ENCODE measurements at regions of chr20 and their contacts with region 1.

Region 1: DNA sequence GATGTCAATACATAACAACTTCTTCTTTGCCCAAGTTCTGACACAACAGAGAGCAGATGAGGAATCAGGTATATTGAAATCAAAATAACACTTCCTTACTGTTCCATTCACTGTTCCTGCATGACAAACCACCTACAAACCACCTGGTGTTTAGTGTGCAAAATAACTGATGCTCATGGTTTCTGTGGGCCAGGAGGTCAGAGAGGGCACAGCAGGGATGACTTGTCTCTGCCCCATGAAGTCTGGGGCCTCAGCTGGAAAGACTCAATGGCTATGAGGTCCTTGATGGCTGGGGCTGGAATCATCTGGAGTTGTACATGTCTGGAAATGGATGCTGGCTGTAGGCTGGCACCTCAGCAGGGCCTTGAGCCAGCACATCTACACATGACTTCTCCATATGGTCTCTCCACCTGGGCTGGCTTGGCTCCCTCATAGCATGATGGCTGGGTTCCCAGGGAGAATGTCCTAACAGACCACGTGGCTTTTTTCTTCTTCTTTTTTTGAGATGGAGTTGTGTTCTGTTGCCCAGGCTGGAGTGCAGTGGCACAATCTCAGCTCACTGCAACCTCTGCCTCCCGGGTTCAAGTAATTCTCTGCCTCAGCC is 7.4 kb upstream of the COX4I2 start:
- DNase-seq: no peak
- H3K4me3 ChIP-seq: no peak overlapping the region
- CTCF ChIP-seq: no peak

Region 2: GRCh38 chr20:31560094-31560899 is 70.0 kb before region 1 on chr20:
- CTCF ChIA-PET with region 1: interaction called, 22 read pairs
- POLR2A ChIA-PET with region 1: no interaction called
- DNase-seq: no peak
- H3K4me3 ChIP-seq: no peak overlapping the region
- CTCF ChIP-seq: peak; percentile 89

Region 3: GRCh38 chr20:31597483-31597858 is 32.8 kb before region 1 on chr20:
- CTCF ChIA-PET with region 1: no interaction called
- POLR2A ChIA-PET with region 1: no interaction called
- DNase-seq: no peak
- H3K4me3 ChIP-seq: no peak overlapping the region
- CTCF ChIP-seq: no peak

Region 4: DNA sequence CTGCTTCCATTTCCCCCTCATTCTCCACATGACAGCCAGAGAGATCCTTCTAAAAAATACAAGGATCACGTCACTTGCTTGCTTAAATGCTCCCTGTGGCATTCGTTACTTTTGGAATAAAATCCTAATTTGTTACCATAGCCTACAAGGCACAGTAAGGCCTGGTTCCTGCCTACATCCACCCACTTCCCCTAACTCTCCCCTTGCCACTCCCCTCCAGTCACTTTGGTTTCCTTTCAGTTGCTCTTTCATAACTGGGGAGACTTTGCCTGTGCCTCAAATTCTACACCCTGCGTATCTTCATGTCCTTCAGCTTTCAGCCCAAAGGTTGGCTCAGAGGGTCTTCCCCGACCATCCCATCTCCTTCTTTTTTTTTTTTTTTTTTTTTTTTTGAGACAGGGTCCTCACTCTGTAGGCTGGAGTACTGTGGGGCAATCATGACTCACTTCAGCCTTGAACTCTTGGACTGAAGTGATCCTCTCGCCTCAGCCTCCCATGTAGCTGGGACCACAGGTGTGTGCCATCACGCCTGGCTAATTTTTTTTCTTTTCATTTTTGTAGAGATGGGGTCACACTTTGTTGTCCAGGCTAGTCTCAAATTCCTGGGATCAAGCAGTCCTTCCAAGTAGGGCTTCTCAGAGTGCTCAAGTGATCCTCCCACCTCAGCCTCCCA is 12.7 kb before region 1 on chr20:
- CTCF ChIA-PET with region 1: interaction called, 76 read pairs
- POLR2A ChIA-PET with region 1: no interaction called
- DNase-seq: no peak
- H3K4me3 ChIP-seq: no peak overlapping the region
- CTCF ChIP-seq: no peak

Region 5: DNA sequence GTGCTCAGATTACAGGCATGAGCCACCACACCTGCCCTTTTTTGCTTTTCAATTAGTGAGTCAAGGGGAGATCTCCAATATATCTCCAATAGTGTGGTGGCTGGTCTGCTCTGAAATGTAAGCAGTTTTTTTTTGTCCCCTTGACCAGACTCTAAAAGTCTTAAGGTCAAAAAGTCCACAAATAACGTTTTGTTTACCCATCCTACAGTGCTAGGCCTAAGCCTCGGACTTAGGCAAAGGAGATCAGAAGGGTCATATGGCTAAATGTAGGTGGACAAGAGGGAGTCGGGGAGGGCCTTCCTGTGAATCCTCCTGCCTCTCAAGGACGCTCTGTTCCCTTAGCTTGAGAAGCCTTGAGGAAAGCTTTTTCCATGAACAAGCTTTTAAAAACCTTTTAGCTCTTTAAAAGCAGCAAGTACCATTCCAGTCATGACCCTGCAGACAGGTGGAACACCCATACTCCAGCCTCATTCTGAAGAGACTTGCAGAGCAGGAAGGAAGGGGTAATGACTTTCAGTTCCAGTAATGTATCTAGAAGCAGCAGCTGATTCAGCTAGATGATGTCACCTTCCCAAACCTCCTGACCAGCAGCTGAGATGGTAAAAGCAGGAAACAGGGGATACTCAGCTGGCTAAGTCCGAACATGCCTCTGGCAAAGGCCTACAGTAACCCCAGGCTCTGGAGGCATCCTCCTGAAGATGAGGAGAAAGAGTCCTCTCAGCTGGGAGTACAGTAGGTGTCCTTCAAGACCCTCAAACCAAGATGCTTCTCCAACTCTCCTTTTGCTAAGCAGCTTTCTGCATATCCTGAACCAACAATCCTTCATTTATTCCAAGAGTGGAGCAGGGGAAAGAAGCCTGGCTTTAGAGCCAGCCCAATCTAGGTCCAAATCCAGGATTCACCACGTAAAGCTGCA is 68.8 kb after region 1 on chr20:
- CTCF ChIA-PET with region 1: interaction called, 11 read pairs
- POLR2A ChIA-PET with region 1: no interaction called
- DNase-seq: peak; percentile 87
- H3K4me3 ChIP-seq: no peak overlapping the region
- CTCF ChIP-seq: no peak

Region 6: GRCh38 chr20:31731321-31731717 is 101.0 kb after region 1 on chr20:
- CTCF ChIA-PET with region 1: interaction called, 23 read pairs
- POLR2A ChIA-PET with region 1: no interaction called
- DNase-seq: no peak
- H3K4me3 ChIP-seq: no peak overlapping the region
- CTCF ChIP-seq: no peak

Measured in AG04449 (cell line).